GM18951 (cell line): ENCODE measurements at regions of chr1 and their contacts with region 1.

Region 1: GRCh38 chr1:24694380-24694843 is 50.8 kb upstream of the CLIC4 start:
- POLR2A ChIP-seq: no peak

Region 2: DNA sequence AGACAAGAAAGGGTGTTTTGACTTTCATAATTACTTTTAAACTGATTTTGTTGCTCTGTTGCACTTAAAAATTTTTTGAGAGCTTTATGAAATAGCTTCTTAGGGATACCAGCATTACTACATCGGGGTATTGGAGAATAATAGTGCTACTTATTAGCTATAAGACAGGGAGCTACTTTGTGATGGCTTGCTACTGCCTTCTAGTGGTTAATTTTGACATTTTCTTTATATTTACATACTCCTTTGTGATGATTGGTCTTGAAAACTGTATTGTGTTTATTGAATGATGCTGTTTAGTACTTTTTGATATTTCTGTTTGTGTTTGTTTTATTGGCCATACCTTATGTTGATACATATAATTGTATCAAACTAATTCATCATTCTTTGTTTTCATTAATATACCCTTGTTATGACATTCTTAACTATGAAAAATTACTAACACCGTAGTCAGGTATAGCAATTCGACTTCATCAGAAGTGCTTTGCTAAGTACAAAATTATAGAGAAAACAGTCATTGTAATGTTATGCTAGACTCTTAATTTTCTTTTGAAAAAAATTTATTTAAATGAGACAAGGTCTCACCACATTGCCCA is 136.4 kb after region 1 on chr1:
- in situ Hi-C with region 1: loop called (anchors 5 kb)
- POLR2A ChIP-seq: no peak